Right cardiac atrium (tissue), 5 donors: ENCODE measurements at regions of chr15 and their contacts with region 1.

Region 1: DNA sequence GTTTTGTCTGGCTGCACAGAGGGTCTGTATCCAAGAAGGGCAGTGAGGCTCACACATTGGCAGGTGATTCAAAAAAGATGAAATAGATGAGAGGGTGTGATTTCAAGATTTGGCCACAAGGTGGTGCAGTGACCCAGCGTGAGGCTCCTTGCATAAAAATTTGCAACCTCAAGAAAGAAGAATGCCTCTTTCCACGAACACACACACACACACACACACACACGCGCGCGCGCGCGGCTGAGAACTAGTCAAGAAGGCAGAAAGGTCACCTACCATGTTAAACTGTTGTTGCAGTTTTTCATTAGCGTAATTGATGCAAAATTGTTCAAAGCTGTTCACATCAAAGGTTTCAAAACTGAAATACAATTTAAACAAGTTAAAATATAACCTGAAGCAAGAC is 39.2 kb downstream of the MYO5C start:
- DNase-seq: peak; percentile 54 to 81 (median 65)
- ATAC-seq: peak; percentile 40 to 54
- H3K4me3 ChIP-seq: no peak overlapping the region
- H3K27ac ChIP-seq: no peak overlapping the region
- H3K4me1 ChIP-seq: peaks cover 2% of the 10 kb centered on the region
- H3K27me3 ChIP-seq: no peaks in the 10 kb centered on the region

Region 2: DNA sequence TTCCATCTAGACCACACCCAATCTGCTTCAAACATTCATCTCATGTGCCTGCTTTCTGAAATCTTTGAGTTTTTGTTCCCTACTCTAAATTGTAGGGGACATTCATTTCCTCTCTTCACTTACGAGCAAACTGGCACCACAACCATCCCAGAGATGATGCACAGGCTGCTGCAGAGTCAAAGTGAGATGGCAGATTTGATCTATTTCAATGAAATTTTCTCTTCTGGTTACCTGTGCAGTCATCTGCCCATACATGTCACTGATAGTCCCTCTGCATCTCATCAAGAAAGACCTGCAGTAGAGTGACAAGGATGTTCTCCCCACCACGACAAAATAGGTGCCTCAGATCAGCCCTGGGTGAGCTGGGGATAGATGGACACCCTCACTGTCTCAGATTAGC is 1043.5 kb before region 1 on chr15:
- intact Hi-C with region 1: no loop called
- DNase-seq: no peak
- ATAC-seq: no peak
- H3K4me3 ChIP-seq: no peak overlapping the region
- H3K27ac ChIP-seq: no peak overlapping the region
- H3K4me1 ChIP-seq: no peaks in the 10 kb centered on the region
- H3K27me3 ChIP-seq: peaks cover 3% of the 10 kb centered on the region

Region 3: GRCh38 chr15:52318729-52319500 is 62.5 kb after region 1 on chr15:
- intact Hi-C with region 1: no loop called
- DNase-seq: peak; percentile 37 to 83 (median 71)
- ATAC-seq: peak; percentile 62 to 72
- H3K4me3 ChIP-seq: no peak overlapping the region
- H3K27ac ChIP-seq: no peak overlapping the region
- H3K4me1 ChIP-seq: no peaks in the 10 kb centered on the region
- H3K27me3 ChIP-seq: no peaks in the 10 kb centered on the region

Region 4: GRCh38 chr15:52730173-52730572 is 473.8 kb after region 1 on chr15:
- intact Hi-C with region 1: loop called (anchors 2 to 5 kb)
- DNase-seq: no peak
- ATAC-seq: no peak
- H3K4me3 ChIP-seq: no peak overlapping the region
- H3K27ac ChIP-seq: no peak overlapping the region
- H3K4me1 ChIP-seq: no peaks in the 10 kb centered on the region
- H3K27me3 ChIP-seq: no peaks in the 10 kb centered on the region

Region 5: GRCh38 chr15:52735231-52736089 is 479.1 kb after region 1 on chr15:
- intact Hi-C with region 1: loop called (anchors 2 to 5 kb)
- DNase-seq: no peak
- ATAC-seq: peak; percentile 77 to 88
- H3K4me3 ChIP-seq: no peak overlapping the region
- H3K27ac ChIP-seq: no peak overlapping the region
- H3K4me1 ChIP-seq: no peaks in the 10 kb centered on the region
- H3K27me3 ChIP-seq: no peaks in the 10 kb centered on the region